Activated CD4-positive, alpha-beta memory T cell treated with anti-CD3 and anti-CD28 coated beads for 36 hours (primary cell): ENCODE measurements at regions of chr2 and their contacts with region 1.

Region 1: DNA sequence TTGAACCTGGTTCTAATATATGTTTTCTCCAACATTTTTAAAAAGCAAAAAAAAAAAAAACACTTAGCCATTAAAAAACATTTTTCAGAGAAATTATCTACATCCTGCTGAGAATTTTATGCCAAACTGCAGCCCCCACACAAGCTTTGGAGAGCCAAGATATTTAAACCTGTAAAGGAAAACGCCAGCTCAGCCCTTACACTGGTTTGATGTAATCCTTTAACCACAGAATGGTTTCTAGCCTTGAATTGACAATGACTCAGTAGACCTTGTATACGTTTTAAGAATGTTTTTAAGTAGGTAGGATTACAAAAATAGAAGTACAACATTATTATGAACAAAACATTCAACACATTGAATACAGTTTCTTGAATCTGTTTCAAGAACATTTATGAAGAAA is 113.6 kb downstream of the BABAM2 start:
- DNase-seq: peak; percentile 36
- H3K4me3 Mint-ChIP-seq: no peak overlapping the region
- H3K27ac Mint-ChIP-seq: peak overlapping the region; percentile 79
- H3K4me1 Mint-ChIP-seq: peaks cover 36% of the 10 kb centered on the region
- H3K27me3 Mint-ChIP-seq: no peaks in the 10 kb centered on the region

Region 2: GRCh38 chr2:27754138-27754588 is 249.9 kb before region 1 on chr2:
- CTCF ChIA-PET with region 1: interaction called, 12 read pairs
- POLR2A ChIA-PET with region 1: no interaction called
- intact Hi-C with region 1: no loop called
- DNase-seq: peak; percentile 91
- H3K4me3 Mint-ChIP-seq: no peak overlapping the region
- H3K27ac Mint-ChIP-seq: peak overlapping the region; percentile 30
- H3K4me1 Mint-ChIP-seq: peaks cover 14% of the 10 kb centered on the region
- H3K27me3 Mint-ChIP-seq: peaks cover 10% of the 10 kb centered on the region